Transverse colon (tissue), 4 donors: ENCODE measurements at regions of chr6 and their contacts with region 1.

Region 1: GRCh38 chr6:47097092-47097945 is 55.2 kb upstream of the ADGRF1 start:
- DNase-seq: peak; percentile 74
- H3K4me3 ChIP-seq: no peak overlapping the region
- H3K27ac ChIP-seq: peak overlapping the region in 2 of 4 donors; percentile 3 to 56
- H3K4me1 ChIP-seq: peaks cover 0 to 33% (median 14%) of the 10 kb centered on the region in 4 donors
- H3K27me3 ChIP-seq: no peaks in the 10 kb centered on the region
- CTCF ChIP-seq: peak; percentile 65 to 87 (median 75)
- EP300 ChIP-seq: no peak
- POLR2A ChIP-seq: no peak

Region 2: DNA sequence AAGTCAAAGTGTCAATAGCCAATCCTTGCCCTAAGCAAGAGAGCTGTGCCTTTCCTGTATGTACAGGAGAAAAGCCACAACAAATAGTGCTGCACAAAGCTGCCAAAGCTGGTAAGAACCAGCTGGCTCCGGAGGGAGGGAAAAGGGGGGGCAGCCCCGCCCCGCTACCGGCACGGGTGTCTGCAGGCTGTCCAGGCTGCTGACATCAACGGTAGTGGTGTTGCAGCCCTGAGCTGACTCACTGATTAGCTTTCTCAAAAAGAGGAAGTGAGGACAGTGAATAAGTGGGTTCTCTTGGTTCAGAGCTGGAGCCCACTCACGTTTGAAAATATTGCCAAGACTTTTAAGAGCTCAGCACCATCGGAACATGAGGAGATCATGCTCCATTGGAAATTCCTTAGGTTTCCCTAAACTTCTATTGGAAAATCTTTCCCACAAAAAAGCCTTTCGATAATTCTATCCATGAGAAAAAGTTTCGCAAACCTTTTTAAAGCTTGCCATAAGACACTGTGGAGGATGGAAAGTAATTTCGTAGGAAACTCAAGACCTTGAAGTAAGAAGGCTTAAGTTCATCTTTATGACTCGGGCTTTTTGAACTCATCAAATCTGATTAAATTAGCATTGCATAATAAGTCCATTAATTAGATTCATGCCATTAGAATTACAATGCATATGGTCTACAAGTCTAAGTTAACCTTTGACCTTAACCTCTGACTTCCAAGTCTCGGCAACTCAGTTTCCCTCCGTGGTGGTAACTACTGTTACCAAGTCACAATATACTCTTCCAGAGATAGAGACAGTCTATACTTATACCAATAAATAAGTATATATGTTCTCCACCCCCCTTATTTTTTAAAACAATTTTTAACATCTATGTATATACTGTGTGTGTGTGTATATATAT is 145.4 kb after region 1 on chr6:
- in situ Hi-C with region 1: loop called in 1 of 4 experiments (anchors 5 kb)
- intact Hi-C with region 1: no loop called
- DNase-seq: peak; percentile 93
- H3K4me3 ChIP-seq: no peak overlapping the region
- H3K27ac ChIP-seq: peak overlapping the region; percentile 61 to 80 (median 70)
- H3K4me1 ChIP-seq: peaks cover 14 to 47% (median 27%) of the 10 kb centered on the region in 4 donors
- H3K27me3 ChIP-seq: no peaks in the 10 kb centered on the region
- CTCF ChIP-seq: no peak
- EP300 ChIP-seq: peak; percentile 92
- POLR2A ChIP-seq: no peak

Region 3: GRCh38 chr6:47256361-47256760 is 159.0 kb after region 1 on chr6:
- in situ Hi-C with region 1: no loop called
- intact Hi-C with region 1: no loop called
- DNase-seq: no peak
- H3K4me3 ChIP-seq: no peak overlapping the region
- H3K27ac ChIP-seq: no peak overlapping the region
- H3K4me1 ChIP-seq: no peaks in the 10 kb centered on the region
- H3K27me3 ChIP-seq: no peaks in the 10 kb centered on the region
- CTCF ChIP-seq: no peak
- EP300 ChIP-seq: no peak
- POLR2A ChIP-seq: no peak

Region 4: DNA sequence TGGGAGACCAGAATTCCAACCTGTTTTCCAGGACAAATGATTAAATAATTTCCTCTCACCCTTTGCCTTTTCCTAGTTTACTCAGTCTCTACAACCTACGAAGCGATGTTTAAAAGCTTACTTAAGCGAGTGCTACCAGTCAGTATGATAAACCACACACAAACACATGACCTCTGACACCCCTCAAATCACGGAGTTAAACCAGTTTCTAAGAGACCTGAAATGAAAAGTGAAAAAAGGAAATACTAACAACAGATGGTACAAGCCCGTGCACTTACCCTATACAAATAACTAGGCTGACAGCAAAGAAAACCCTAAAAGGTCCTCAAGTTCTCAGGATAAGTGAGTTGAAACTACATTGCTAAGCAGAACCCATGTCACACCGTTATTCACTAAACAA is 204.7 kb after region 1 on chr6:
- in situ Hi-C with region 1: loop called (anchors 5 to 10 kb)
- intact Hi-C with region 1: no loop called
- DNase-seq: no peak
- H3K4me3 ChIP-seq: no peak overlapping the region
- H3K27ac ChIP-seq: no peak overlapping the region
- H3K4me1 ChIP-seq: peaks cover 3 to 58% (median 24%) of the 10 kb centered on the region in 4 donors
- H3K27me3 ChIP-seq: no peaks in the 10 kb centered on the region
- CTCF ChIP-seq: no peak
- EP300 ChIP-seq: no peak
- POLR2A ChIP-seq: no peak